Activated CD4-positive, alpha-beta memory T cell treated with anti-CD3 and anti-CD28 coated beads, Interleukin-2, amount 10 ng/mL, durations not matched to agents 7 days and 5 days (primary cell): ENCODE measurements at regions of chr16 and their contacts with region 1.

Region 1: DNA sequence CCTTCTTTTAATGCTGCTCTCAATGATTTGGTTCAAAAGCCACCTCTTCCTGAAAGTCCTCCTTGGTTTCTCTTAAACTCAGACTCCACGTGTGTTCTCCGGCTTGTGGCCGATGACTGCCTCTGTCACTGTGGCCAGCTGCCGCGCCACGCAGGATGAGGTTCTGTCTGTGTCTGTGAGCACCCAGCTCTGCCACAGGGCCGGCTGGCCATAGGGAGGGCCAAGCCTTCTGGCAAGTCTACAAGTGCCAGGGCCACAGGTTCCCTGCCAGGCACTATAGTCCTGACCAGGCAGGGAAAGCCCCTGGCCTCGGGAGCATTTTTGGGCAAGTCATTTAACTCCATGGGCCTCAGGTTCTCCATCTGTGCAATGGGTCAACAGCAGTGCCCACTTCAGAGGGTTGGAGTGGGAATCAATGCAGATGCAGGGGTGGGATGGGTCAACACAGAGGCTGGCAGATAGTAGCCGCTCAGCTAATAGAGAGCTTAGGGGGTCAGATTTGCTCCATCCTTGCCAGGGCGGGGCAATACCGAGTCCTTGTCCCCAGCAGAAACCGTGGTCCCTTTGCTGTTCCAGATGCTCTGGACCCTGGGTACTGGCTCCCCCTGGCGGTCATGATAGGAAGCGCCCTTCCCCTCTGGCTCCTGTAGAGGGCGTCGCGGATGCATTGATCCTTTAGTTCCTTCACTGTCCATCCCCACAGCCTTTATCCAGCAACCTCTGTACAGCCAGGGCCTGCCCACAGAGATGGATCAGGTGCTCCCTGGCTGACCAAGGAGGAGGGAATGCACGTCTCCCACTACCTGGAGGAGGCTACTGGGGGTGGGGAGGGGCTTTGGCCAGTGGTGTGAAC is 19.3 kb upstream of the ADGRG3 start:
- DNase-seq: peak; percentile 92
- H3K4me3 Mint-ChIP-seq: no peak overlapping the region
- H3K27ac Mint-ChIP-seq: peak overlapping the region; percentile 56
- H3K4me1 Mint-ChIP-seq: peaks cover 39% of the 10 kb centered on the region
- H3K27me3 Mint-ChIP-seq: no peaks in the 10 kb centered on the region

Region 2: GRCh38 chr16:57471852-57472664 is 176.8 kb before region 1 on chr16:
- CTCF ChIA-PET with region 1: no interaction called
- POLR2A ChIA-PET with region 1: no interaction called
- DNase-seq: no peak
- H3K4me3 Mint-ChIP-seq: no peak overlapping the region
- H3K27ac Mint-ChIP-seq: peak overlapping the region; percentile 21
- H3K4me1 Mint-ChIP-seq: peaks cover 16% of the 10 kb centered on the region
- H3K27me3 Mint-ChIP-seq: no peaks in the 10 kb centered on the region

Region 3: GRCh38 chr16:57591086-57591869 is 57.5 kb before region 1 on chr16:
- CTCF ChIA-PET with region 1: interaction called, 167 read pairs
- POLR2A ChIA-PET with region 1: interaction called, 11 read pairs
- DNase-seq: peak; percentile 78
- H3K4me3 Mint-ChIP-seq: peak overlapping the region; percentile 61
- H3K27ac Mint-ChIP-seq: peak overlapping the region; percentile 91
- H3K4me1 Mint-ChIP-seq: peaks cover 57% of the 10 kb centered on the region
- H3K27me3 Mint-ChIP-seq: peaks cover 3% of the 10 kb centered on the region

Region 4: GRCh38 chr16:57600048-57600835 is 48.6 kb before region 1 on chr16:
- CTCF ChIA-PET with region 1: interaction called, 77 read pairs
- POLR2A ChIA-PET with region 1: interaction called, 18 read pairs
- DNase-seq: peak; percentile 50
- H3K4me3 Mint-ChIP-seq: no peak overlapping the region
- H3K27ac Mint-ChIP-seq: peak overlapping the region; percentile 97
- H3K4me1 Mint-ChIP-seq: peaks cover 66% of the 10 kb centered on the region
- H3K27me3 Mint-ChIP-seq: peaks cover 4% of the 10 kb centered on the region

Region 5: GRCh38 chr16:57609541-57610401 is 39.0 kb before region 1 on chr16:
- CTCF ChIA-PET with region 1: interaction called, 83 read pairs
- POLR2A ChIA-PET with region 1: interaction called, 18 read pairs
- DNase-seq: peak; percentile 81
- H3K4me3 Mint-ChIP-seq: peak overlapping the region; percentile 40
- H3K27ac Mint-ChIP-seq: peak overlapping the region; percentile 89
- H3K4me1 Mint-ChIP-seq: peaks cover 63% of the 10 kb centered on the region
- H3K27me3 Mint-ChIP-seq: peaks cover 2% of the 10 kb centered on the region

Region 6: GRCh38 chr16:57734925-57735754 is 86.3 kb after region 1 on chr16:
- CTCF ChIA-PET with region 1: interaction called, 29 read pairs
- POLR2A ChIA-PET with region 1: no interaction called
- DNase-seq: peak; percentile 98
- H3K4me3 Mint-ChIP-seq: peak overlapping the region; percentile 93
- H3K27ac Mint-ChIP-seq: peak overlapping the region; percentile 81
- H3K4me1 Mint-ChIP-seq: peaks cover 30% of the 10 kb centered on the region
- H3K27me3 Mint-ChIP-seq: no peaks in the 10 kb centered on the region